ENCODE measurements at regions of chr13 and their contacts with region 1.

Region 1: DNA sequence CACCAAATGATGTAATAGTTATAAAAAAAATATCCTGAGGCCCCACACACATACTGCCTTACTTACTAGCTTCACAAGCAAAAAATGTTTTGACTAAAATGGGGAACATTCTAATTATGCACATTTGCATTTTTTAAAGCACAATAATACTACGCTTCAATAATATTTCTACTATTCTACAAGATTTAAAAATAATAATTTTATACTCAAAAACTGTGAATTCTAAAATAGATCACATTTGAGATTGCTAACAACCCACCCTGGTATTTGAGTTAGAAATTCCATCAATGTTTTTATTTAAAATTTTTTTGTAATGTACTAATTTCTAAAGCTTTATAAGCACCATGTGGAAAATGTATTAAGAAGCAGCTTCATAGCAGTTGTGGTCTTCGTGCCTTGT is 24.2 kb downstream of the CCDC169 start:
- DNase-seq: no peak
- H3K4me3 ChIP-seq: no peak overlapping the region
- H3K27ac ChIP-seq: no peak overlapping the region
- H3K4me1 ChIP-seq: no peaks in the 10 kb centered on the region
- H3K27me3 ChIP-seq: no peaks in the 10 kb centered on the region
- CTCF ChIP-seq: no peak
- EP300 ChIP-seq: no peak
- POLR2A ChIP-seq: no peak

Region 2: DNA sequence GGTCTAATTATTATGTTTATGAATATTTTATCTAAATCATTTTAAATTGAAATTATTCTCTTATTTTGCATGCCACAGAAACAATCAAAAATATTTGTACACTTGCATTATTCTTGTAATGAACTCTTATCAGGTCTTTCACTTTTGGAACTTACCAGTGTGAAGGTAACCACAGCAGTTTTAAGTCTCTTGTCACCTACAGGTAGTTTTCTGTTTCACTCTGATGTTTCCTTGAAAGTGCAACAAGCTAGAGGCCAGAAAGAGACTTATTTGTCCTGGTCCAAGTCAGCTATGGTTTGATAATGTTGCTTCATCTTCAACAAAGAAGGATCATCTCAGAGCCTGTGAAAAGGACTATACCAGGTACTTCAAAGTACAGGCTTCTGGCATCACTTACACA is 1464.8 kb before region 1 on chr13:
- intact Hi-C with region 1: no loop called
- DNase-seq: no peak
- H3K4me3 ChIP-seq: no peak overlapping the region
- H3K27ac ChIP-seq: no peak overlapping the region
- H3K4me1 ChIP-seq: no peaks in the 10 kb centered on the region
- H3K27me3 ChIP-seq: no peaks in the 10 kb centered on the region
- CTCF ChIP-seq: no peak
- EP300 ChIP-seq: no peak
- POLR2A ChIP-seq: no peak

Region 3: DNA sequence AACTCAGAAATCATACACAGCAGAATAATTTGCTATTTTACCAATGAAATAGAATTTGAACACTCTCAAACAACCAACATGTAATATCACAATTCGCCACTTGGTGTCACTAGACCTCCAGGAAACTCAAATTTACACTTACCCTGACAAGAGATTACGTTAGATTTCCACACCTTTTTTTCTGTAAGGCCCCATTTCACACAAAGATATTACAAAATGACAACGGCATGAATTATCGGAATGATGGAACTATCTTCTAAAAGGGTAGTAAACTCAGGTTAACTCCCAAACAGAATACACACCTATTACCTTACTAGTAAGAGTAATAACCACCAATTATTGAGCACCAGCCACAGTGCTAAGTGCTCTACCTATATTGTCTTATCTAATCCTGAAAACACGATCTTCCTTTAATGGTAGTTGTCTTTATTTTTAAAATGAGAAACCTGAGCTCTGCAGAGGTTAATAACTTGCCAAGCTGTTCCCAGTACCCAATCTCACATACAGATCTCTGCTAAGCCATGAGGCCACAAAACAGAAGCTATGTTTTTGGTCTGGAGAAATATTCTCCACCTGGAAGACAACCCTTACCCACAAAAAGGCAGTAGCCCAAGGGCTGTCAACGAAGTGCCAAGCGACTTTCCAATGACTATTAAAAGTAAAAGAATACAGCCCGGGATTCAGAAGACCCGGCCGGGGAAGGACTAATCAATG is 294.7 kb before region 1 on chr13:
- intact Hi-C with region 1: loop called (anchors 5 kb)
- DNase-seq: peak in 1 of 2 donors; percentile 84
- H3K4me3 ChIP-seq: no peak overlapping the region
- H3K27ac ChIP-seq: peak overlapping the region in 4 of 5 donors; percentile 47 to 68 (median 58)
- H3K4me1 ChIP-seq: peaks cover 0 to 11% (median 5%) of the 10 kb centered on the region in 4 donors
- H3K27me3 ChIP-seq: no peaks in the 10 kb centered on the region
- CTCF ChIP-seq: peak in 5 of 7 experiments; percentile 57 to 89 (median 82)
- EP300 ChIP-seq: no peak
- POLR2A ChIP-seq: no peak

Region 4: DNA sequence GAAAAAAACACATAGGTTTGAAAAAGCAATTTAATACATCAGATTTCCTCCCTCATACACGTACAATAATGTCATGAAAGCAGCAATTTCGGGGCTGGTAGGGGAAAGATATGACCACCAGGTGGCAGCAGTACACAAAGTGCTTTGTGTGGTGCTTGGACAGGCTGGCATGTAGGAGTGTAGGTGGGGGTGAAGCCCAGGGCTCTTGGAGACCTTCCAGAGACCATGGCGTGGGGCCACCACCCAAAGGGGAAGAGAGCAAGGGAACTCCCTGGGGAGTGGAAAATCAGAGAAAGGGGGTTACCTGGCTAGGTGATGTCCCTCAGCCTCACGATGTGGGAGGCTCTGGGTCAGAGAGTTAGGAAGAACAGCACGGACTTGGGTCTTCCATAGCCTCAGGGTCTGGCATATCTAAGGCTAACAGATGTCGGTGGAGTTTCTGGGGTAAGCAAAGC is 147.0 kb after region 1 on chr13:
- intact Hi-C with region 1: no loop called
- DNase-seq: peak; percentile 71 to 89
- H3K4me3 ChIP-seq: no peak overlapping the region
- H3K27ac ChIP-seq: no peak overlapping the region
- H3K4me1 ChIP-seq: peaks cover 0 to 20% (median 9%) of the 10 kb centered on the region in 4 donors
- H3K27me3 ChIP-seq: peaks cover 0 to 4% (median 0%) of the 10 kb centered on the region in 3 donors
- CTCF ChIP-seq: peak in 5 of 7 experiments; percentile 51 to 76 (median 63)
- EP300 ChIP-seq: no peak
- POLR2A ChIP-seq: no peak